A673 (cell line): ENCODE measurements at regions of chr2 and their contacts with region 1.

Region 1: GRCh38 chr2:43977677-43978375 is 18.0 kb downstream of the LRPPRC start:
- DNase-seq: no peak
- H3K4me3 ChIP-seq: no peak overlapping the region
- H3K27ac ChIP-seq: no peak overlapping the region
- H3K4me1 ChIP-seq: no peaks in the 10 kb centered on the region
- H3K27me3 ChIP-seq: no peaks in the 10 kb centered on the region
- CTCF ChIP-seq: no peak

Region 2: DNA sequence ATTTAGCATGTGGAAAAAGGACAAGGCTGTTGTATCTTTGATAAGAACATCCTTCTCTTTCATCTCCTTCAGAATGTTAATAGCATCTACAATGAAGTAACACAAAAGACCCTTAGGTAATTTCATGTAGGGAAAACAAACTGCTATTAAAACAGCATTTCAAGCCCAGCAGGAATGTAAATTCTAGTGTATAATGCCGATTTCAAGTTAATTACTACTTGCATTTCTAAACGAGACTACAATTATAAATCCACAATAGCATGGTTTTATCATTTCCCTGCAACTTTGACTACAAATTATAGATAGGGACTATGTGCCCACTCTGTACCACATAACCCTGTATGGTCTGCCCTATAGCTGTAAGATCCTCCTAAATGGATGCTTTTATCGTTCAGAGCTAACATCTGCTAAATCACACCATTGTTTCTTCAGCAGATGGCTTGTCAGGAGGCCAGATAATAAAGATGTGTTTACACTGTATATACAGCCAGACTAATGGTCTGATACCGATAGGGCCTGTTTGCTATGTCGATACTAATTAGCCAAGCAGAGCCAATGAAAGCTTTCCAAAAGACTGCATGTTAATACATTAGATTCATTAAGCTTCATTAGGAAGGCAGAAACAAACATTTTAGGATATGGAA is 33.9 kb before region 1 on chr2:
- CTCF ChIA-PET with region 1: no interaction called
- POLR2A ChIA-PET with region 1: no interaction called
- intact Hi-C with region 1: loop called (anchors 5 kb)
- DNase-seq: no peak
- H3K4me3 ChIP-seq: no peak overlapping the region
- H3K27ac ChIP-seq: no peak overlapping the region
- H3K4me1 ChIP-seq: peaks cover 35% of the 10 kb centered on the region
- H3K27me3 ChIP-seq: no peaks in the 10 kb centered on the region
- CTCF ChIP-seq: no peak

Region 3: GRCh38 chr2:43995733-43996533 is 18.1 kb after region 1 on chr2 and contains the start of gene LRPPRC:
- CTCF ChIA-PET with region 1: no interaction called
- POLR2A ChIA-PET with region 1: interaction called, 10 read pairs
- intact Hi-C with region 1: no loop called
- DNase-seq: peak; percentile 98
- H3K4me3 ChIP-seq: peak within 1 kb of the TSS; percentile 94
- H3K27ac ChIP-seq: peak within 1 kb of the TSS; percentile 97
- H3K4me1 ChIP-seq: peaks cover 5% of the 10 kb centered on the region
- H3K27me3 ChIP-seq: peaks cover under 1% of the 10 kb centered on the region
- CTCF ChIP-seq: no peak
- total RNA-seq, gene LRPPRC: 136 and 144 TPM in 2 replicates

Region 4: GRCh38 chr2:44450806-44451205 is 473.0 kb after region 1 on chr2:
- CTCF ChIA-PET with region 1: no interaction called
- POLR2A ChIA-PET with region 1: no interaction called
- intact Hi-C with region 1: no loop called
- DNase-seq: peak; percentile 17
- H3K4me3 ChIP-seq: no peak overlapping the region
- H3K27ac ChIP-seq: no peak overlapping the region
- H3K4me1 ChIP-seq: peaks cover 11% of the 10 kb centered on the region
- H3K27me3 ChIP-seq: no peaks in the 10 kb centered on the region
- CTCF ChIP-seq: no peak

Region 5: GRCh38 chr2:45046786-45047185 is 1069.0 kb after region 1 on chr2:
- CTCF ChIA-PET with region 1: no interaction called
- POLR2A ChIA-PET with region 1: no interaction called
- intact Hi-C with region 1: no loop called
- DNase-seq: no peak
- H3K4me3 ChIP-seq: no peak overlapping the region
- H3K27ac ChIP-seq: no peak overlapping the region
- H3K4me1 ChIP-seq: no peaks in the 10 kb centered on the region
- H3K27me3 ChIP-seq: peaks cover 24% of the 10 kb centered on the region
- CTCF ChIP-seq: no peak